Activated B cell treated with CpG ODN at 0.5 μM for 24 hours (primary cell): ENCODE measurements at regions of chrX and their contacts with region 1.

Region 1: GRCh38 chrX:21985332-21985777 is 44.8 kb downstream of the SMS start:
- DNase-seq: peak; percentile 40
- ATAC-seq: peak; percentile 93
- H3K4me3 Mint-ChIP-seq: no peak overlapping the region
- H3K27ac Mint-ChIP-seq: no peak overlapping the region
- H3K4me1 Mint-ChIP-seq: peaks cover 16% of the 10 kb centered on the region
- H3K27me3 Mint-ChIP-seq: no peaks in the 10 kb centered on the region
- CTCF ChIP-seq: peak; percentile 44

Region 2: DNA sequence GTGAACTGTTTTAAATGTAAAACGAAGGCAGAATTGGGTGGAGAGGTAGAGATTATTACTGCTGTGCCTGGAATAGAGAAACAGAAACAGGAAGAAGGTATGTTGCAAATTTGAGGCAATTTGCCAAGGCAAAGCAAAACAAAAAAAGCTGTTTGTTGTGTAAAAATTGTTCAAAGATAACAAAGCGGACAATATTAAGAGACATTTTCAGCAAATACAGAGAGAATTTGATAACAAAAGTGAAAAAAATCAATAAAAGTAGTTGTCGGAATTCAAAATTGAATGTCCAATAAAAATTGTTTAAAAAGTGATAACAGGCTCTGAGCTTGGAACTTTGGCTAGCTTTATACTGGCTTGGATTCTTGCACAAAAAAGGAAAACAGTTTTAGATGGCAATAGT is 59.2 kb before region 1 on chrX:
- CTCF ChIA-PET with region 1: no interaction called
- POLR2A ChIA-PET with region 1: no interaction called
- intact Hi-C with region 1: no loop called
- DNase-seq: no peak
- ATAC-seq: no peak
- H3K4me3 Mint-ChIP-seq: no peak overlapping the region
- H3K27ac Mint-ChIP-seq: no peak overlapping the region
- H3K4me1 Mint-ChIP-seq: peaks cover 2% of the 10 kb centered on the region
- H3K27me3 Mint-ChIP-seq: no peaks in the 10 kb centered on the region
- CTCF ChIP-seq: no peak

Region 3: DNA sequence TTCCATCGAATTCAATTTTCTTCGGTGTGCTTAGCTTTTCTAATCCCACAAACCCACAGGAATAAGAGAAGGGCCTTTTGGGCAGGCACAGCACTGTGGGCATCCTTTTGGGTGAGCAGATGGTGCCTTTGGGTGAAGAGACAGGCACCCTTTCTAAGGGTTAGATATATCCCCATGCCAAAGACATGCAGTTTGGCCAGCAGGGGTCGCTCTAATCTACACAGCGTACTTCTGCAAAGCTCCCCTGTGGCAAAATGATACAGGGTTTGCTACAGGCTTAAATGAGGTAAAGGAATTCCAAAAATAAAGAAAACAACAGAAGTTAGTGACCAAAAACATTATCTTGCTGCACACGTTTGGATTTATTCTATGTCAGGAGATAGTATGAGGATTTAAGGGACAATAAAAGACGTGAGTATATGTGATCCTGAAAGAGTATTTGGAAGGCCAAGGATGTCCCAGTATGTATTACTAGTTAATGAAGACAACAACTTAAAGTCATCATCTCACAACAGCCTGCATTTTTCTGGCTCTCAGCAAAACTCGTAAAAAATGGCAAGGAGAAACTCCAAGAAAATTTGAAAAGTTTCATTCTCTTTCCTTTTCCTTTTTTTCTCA is 96.2 kb after region 1 on chrX:
- CTCF ChIA-PET with region 1: interaction called, 14 read pairs
- POLR2A ChIA-PET with region 1: interaction called, 7 read pairs
- intact Hi-C with region 1: loop called (anchors 1 kb)
- DNase-seq: no peak
- ATAC-seq: peak; percentile 57
- H3K4me3 Mint-ChIP-seq: no peak overlapping the region
- H3K27ac Mint-ChIP-seq: no peak overlapping the region
- H3K4me1 Mint-ChIP-seq: peaks cover 2% of the 10 kb centered on the region
- H3K27me3 Mint-ChIP-seq: no peaks in the 10 kb centered on the region
- CTCF ChIP-seq: no peak

Region 4: GRCh38 chrX:22534643-22535042 is 549.3 kb after region 1 on chrX:
- CTCF ChIA-PET with region 1: interaction called, 9 read pairs
- POLR2A ChIA-PET with region 1: no interaction called
- intact Hi-C with region 1: loop called (anchors 1 kb)
- DNase-seq: no peak
- ATAC-seq: no peak
- H3K4me3 Mint-ChIP-seq: no peak overlapping the region
- H3K27ac Mint-ChIP-seq: no peak overlapping the region
- H3K4me1 Mint-ChIP-seq: peaks cover 3% of the 10 kb centered on the region
- H3K27me3 Mint-ChIP-seq: peaks cover 5% of the 10 kb centered on the region
- CTCF ChIP-seq: no peak

Region 5: DNA sequence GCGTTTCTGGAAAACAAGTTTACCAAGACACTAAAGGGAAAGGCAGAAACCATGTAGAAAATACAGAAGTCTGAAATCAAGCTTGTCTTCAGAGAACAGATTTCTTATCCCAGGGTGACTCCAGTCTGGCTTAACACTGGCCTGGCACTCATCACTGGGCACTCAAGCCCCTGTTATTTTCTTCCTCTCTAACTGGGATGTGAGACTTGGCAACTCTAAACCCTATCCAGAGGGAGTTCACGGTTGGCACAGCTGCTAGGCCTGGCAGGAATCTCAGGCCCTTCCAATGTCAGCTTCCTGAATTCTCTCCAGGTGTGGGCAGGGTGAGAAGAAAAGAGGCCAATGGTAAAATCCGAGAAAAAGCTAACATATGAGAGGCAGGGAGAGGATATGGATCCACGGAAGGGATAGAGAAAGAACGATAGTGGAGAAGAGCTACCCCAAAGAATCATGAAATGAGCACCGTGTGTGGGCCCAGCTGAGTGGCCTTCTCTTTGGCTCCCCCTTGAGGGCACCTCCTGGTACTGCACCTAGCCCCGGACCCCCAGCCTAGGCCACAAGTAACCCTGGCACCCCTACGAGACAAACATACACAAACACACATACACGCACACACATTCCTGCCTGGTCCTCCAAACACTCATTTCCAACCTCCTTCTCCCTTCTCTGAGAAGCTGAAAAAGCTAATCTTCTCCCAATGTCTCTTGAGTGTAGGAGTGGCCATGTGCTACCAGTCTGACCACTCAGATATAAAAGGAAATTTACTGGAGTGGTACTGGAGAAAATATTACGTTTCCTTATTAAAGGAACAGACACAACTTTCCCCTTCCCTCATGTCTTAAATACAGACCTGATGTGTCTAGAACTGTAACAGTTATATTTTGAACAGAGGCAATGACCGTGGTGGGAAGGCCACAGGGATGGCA is 1332.7 kb after region 1 on chrX:
- CTCF ChIA-PET with region 1: interaction called, 10 read pairs
- POLR2A ChIA-PET with region 1: no interaction called
- intact Hi-C with region 1: no loop called
- DNase-seq: no peak
- ATAC-seq: peak; percentile 57
- H3K4me3 Mint-ChIP-seq: no peak overlapping the region
- H3K27ac Mint-ChIP-seq: no peak overlapping the region
- H3K4me1 Mint-ChIP-seq: no peaks in the 10 kb centered on the region
- H3K27me3 Mint-ChIP-seq: no peaks in the 10 kb centered on the region
- CTCF ChIP-seq: no peak

Region 6: GRCh38 chrX:23901805-23902204 is 1916.5 kb after region 1 on chrX:
- CTCF ChIA-PET with region 1: interaction called, 6 read pairs
- POLR2A ChIA-PET with region 1: no interaction called
- intact Hi-C with region 1: loop called (anchors 1 kb)
- DNase-seq: no peak
- ATAC-seq: peak; percentile 87
- H3K4me3 Mint-ChIP-seq: no peak overlapping the region
- H3K27ac Mint-ChIP-seq: no peak overlapping the region
- H3K4me1 Mint-ChIP-seq: peaks cover 4% of the 10 kb centered on the region
- H3K27me3 Mint-ChIP-seq: no peaks in the 10 kb centered on the region
- CTCF ChIP-seq: no peak